Esophagus muscularis mucosa (tissue), 4 donors: ENCODE measurements at regions of chr17 and their contacts with region 1.

Region 1: DNA sequence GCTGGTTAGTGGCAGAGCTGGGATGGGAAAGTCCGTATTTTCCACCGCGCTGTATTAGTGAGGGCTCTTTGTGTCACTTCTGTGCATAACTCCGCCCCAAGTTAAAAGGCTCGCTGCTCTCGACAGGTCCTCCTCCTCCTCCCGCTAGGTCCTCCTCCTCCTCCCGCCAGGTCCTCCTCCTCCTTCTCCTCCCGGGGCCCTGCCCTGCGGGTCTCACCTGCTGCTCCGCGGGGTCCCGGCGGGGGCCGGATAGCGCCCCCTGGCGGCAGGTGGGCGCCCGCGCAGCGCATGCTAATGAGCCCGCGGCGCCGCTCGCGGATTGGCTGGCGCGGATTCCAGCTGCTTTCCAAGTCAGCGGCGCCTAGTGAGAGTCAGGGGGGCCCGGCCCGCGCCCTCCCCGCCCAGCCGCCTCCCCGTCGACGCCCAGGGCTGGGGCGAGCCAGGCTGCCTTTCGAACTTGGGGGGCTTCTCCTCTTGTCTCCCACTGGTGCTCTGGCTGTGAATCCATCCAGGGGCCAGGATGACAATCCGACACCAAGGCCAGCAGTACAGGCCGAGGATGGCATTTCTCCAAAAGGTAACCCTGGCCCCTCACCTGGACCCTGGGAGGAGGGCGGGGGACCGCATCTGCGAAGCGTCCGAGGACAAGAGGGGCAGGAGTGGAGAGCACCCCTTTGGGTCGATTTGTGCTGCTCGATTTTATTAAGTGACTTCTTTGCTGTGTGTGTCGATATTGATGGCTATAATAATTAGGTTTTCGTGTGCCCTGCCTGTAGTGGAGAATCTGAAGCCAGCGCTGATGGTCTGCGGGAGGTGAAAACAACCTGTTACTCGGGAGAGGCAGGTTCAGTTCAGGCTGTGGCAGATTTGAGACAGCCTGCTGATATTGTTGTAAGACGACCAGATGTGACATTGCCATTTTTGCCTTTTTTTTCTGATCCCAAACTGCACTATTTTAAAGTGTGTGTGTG is at the start of gene RGS9:
- DNase-seq: peak; percentile 95
- H3K4me3 ChIP-seq: peak within 1 kb of the TSS; percentile 58 to 78 (median 68)
- H3K27ac ChIP-seq: peak within 1 kb of the TSS; percentile 29 to 67 (median 58)
- H3K4me1 ChIP-seq: peaks cover 11 to 33% (median 32%) of the 10 kb centered on the region in 4 donors
- H3K27me3 ChIP-seq: peaks cover 0 to 6% (median 0%) of the 10 kb centered on the region in 4 donors
- CTCF ChIP-seq: peak in 2 of 3 experiments; percentile 99
- EP300 ChIP-seq: no peak
- POLR2A ChIP-seq: no peak
- total RNA-seq, gene RGS9: 22.4 to 58.6 (median 32.2) TPM

Region 2: GRCh38 chr17:64968652-64969501 is 168.4 kb before region 1 on chr17:
- intact Hi-C with region 1: loop called (anchors 5 kb)
- DNase-seq: no peak
- H3K4me3 ChIP-seq: no peak overlapping the region
- H3K27ac ChIP-seq: no peak overlapping the region
- H3K4me1 ChIP-seq: peaks cover 10 to 35% (median 27%) of the 10 kb centered on the region in 4 donors
- H3K27me3 ChIP-seq: no peaks in the 10 kb centered on the region
- CTCF ChIP-seq: no peak
- EP300 ChIP-seq: no peak
- POLR2A ChIP-seq: no peak

Region 3: DNA sequence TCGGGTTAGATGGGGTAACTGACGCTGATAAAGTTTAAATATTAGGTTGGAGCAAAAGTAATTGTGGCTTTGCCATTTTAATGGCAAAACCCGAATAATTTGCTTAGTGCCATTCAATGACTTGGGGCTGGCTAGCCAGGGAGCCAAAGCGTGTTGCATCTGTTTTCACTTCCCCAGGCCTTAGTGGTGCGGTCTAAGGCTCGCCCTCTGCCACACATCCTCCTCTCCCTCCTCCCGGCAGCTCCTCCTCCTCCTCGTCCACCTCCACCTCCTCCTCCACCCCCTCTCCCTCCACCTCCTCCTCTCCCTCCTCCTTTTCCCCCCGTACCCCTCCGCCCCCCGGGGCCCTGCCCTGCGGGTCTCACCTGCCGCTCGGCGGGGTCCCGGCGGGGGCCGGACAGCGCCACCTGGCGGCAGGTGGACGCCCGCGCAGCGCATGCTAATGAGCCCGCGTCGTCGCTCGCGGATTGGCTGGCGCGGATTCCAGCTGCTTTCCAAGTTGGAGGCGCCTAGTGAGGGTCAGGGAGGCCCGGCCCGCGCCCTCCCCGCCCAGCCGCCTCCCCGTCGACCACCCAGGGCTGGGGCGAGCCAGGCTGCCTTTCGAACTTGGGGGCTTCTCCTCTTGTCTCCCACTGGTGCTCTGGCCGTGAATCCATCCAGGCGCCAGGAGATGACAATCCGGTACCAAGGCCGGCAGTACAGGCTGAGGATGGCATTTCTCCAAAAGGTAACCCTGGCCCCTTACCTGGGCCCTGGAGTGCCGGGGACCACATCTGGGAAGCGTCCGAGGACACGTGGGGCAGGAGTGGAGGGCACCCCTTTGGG is 36.8 kb before region 1 on chr17:
- intact Hi-C with region 1: loop called (anchors 5 kb)
- DNase-seq: peak; percentile 93
- H3K4me3 ChIP-seq: peak overlapping the region; percentile 59 to 68 (median 65)
- H3K27ac ChIP-seq: peak overlapping the region; percentile 81 to 84 (median 82)
- H3K4me1 ChIP-seq: peaks cover 13 to 42% (median 38%) of the 10 kb centered on the region in 4 donors
- H3K27me3 ChIP-seq: no peaks in the 10 kb centered on the region
- CTCF ChIP-seq: peak in 2 of 3 experiments; percentile 96
- EP300 ChIP-seq: no peak
- POLR2A ChIP-seq: no peak

Region 4: GRCh38 chr17:65173284-65173793 is 36.0 kb after region 1 on chr17:
- intact Hi-C with region 1: no loop called
- DNase-seq: no peak
- H3K4me3 ChIP-seq: no peak overlapping the region
- H3K27ac ChIP-seq: no peak overlapping the region
- H3K4me1 ChIP-seq: peaks cover 0 to 18% (median 17%) of the 10 kb centered on the region in 4 donors
- H3K27me3 ChIP-seq: no peaks in the 10 kb centered on the region
- CTCF ChIP-seq: no peak
- EP300 ChIP-seq: no peak
- POLR2A ChIP-seq: no peak

Region 5: GRCh38 chr17:65198653-65199382 is 61.5 kb after region 1 on chr17:
- intact Hi-C with region 1: loop called (anchors 5 kb)
- DNase-seq: no peak
- H3K4me3 ChIP-seq: no peak overlapping the region
- H3K27ac ChIP-seq: no peak overlapping the region
- H3K4me1 ChIP-seq: peaks cover 0 to 7% (median 3%) of the 10 kb centered on the region in 4 donors
- H3K27me3 ChIP-seq: no peaks in the 10 kb centered on the region
- CTCF ChIP-seq: peak; percentile 72 to 81 (median 74)
- EP300 ChIP-seq: no peak
- POLR2A ChIP-seq: no peak

Region 6: GRCh38 chr17:65219124-65219523 is 81.8 kb after region 1 on chr17:
- intact Hi-C with region 1: no loop called
- DNase-seq: no peak
- H3K4me3 ChIP-seq: no peak overlapping the region
- H3K27ac ChIP-seq: no peak overlapping the region
- H3K4me1 ChIP-seq: no peaks in the 10 kb centered on the region
- H3K27me3 ChIP-seq: no peaks in the 10 kb centered on the region
- CTCF ChIP-seq: no peak
- EP300 ChIP-seq: no peak
- POLR2A ChIP-seq: no peak